CD8-positive, alpha-beta T cell (primary cell): ENCODE measurements at regions of chr2 and their contacts with region 1.

Region 1: GRCh38 chr2:219308142-219309093 is 783 bp downstream of the PTPRN start:
- DNase-seq: peak; percentile 44 to 76 (median 67)
- ATAC-seq: peak; percentile 80
- H3K4me3 ChIP-seq: no peak overlapping the region
- H3K4me3 Mint-ChIP-seq: no peak overlapping the region
- H3K27ac ChIP-seq: no peak overlapping the region
- H3K27ac Mint-ChIP-seq: no peak overlapping the region
- H3K4me1 ChIP-seq: peaks cover 6% of the 10 kb centered on the region
- H3K4me1 Mint-ChIP-seq: peaks cover 2% of the 10 kb centered on the region
- H3K27me3 ChIP-seq: peaks cover 11 to 20% of the 10 kb centered on the region in 2 experiments
- H3K27me3 Mint-ChIP-seq: peaks cover 55% of the 10 kb centered on the region
- CTCF ChIP-seq: no peak

Region 2: DNA sequence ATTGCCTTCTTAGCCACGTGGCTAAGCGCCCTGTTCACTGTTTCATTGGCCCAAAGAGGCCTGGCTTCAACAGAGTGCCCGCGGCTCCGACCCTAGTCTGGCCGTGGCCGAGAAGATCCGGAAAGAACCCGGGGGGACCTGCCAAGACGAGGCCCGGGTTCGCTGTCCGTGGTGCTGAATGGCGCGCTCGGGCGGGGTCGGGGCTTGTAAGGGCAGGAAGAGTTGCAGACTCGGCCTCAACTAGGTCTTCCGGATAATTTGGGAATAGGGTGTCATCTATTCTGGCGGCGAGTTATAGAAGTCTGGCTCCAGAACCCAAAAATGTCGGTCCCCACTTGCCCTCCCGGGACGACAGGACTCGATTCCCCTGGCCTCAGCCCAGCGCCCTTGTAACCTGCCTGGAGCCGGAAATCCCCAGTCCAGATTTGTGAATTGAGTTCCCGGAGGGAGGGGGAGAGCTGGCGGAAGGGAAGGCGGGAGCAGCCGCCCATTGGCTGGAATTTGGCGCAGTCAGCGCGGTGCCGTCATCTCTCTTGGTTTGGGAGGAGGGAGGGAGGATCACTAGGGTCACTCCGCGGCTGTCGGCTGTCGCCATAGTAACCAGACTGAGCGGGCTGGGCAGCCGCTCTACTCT is 345.4 kb before region 1 on chr2:
- CTCF ChIA-PET with region 1: no interaction called
- POLR2A ChIA-PET with region 1: no interaction called
- intact Hi-C with region 1: loop called in 1 of 2 experiments (anchors 5 kb)
- DNase-seq: peak; percentile 31 to 71 (median 64)
- ATAC-seq: peak; percentile 33
- H3K4me3 ChIP-seq: no peak overlapping the region
- H3K4me3 Mint-ChIP-seq: no peak overlapping the region
- H3K27ac ChIP-seq: no peak overlapping the region
- H3K27ac Mint-ChIP-seq: no peak overlapping the region
- H3K4me1 ChIP-seq: peaks cover 9% of the 10 kb centered on the region
- H3K4me1 Mint-ChIP-seq: peaks cover 18% of the 10 kb centered on the region
- H3K27me3 ChIP-seq: peaks cover 35 to 51% of the 10 kb centered on the region in 2 experiments
- H3K27me3 Mint-ChIP-seq: peaks cover 63% of the 10 kb centered on the region
- CTCF ChIP-seq: no peak

Region 3: GRCh38 chr2:219041252-219041651 is 267.2 kb before region 1 on chr2 and contains the start of gene CFAP65:
- CTCF ChIA-PET with region 1: no interaction called
- POLR2A ChIA-PET with region 1: no interaction called
- intact Hi-C with region 1: loop called in 1 of 2 experiments (anchors 5 kb)
- DNase-seq: peak in 1 of 9 experiments; percentile 48
- ATAC-seq: peak; percentile 63
- H3K4me3 ChIP-seq: no peak within 1 kb of the TSS
- H3K4me3 Mint-ChIP-seq: peak within 1 kb of the TSS; percentile 72
- H3K27ac ChIP-seq: no peak within 1 kb of the TSS
- H3K27ac Mint-ChIP-seq: no peak within 1 kb of the TSS
- H3K4me1 ChIP-seq: peaks cover 3% of the 10 kb centered on the region
- H3K4me1 Mint-ChIP-seq: peaks cover 8% of the 10 kb centered on the region
- H3K27me3 ChIP-seq: peaks cover 7 to 27% of the 10 kb centered on the region in 2 experiments
- H3K27me3 Mint-ChIP-seq: peaks cover 65% of the 10 kb centered on the region
- CTCF ChIP-seq: no peak
- total RNA-seq, gene CFAP65: not detected

Region 4: GRCh38 chr2:219269362-219270054 is 38.9 kb before region 1 on chr2:
- CTCF ChIA-PET with region 1: no interaction called
- POLR2A ChIA-PET with region 1: no interaction called
- intact Hi-C with region 1: loop called in 1 of 2 experiments (anchors 5 kb)
- DNase-seq: no peak
- ATAC-seq: no peak
- H3K4me3 ChIP-seq: no peak overlapping the region
- H3K4me3 Mint-ChIP-seq: no peak overlapping the region
- H3K27ac ChIP-seq: no peak overlapping the region
- H3K27ac Mint-ChIP-seq: no peak overlapping the region
- H3K4me1 ChIP-seq: no peaks in the 10 kb centered on the region
- H3K4me1 Mint-ChIP-seq: no peaks in the 10 kb centered on the region
- H3K27me3 ChIP-seq: no peaks in the 10 kb centered on the region
- H3K27me3 Mint-ChIP-seq: no peaks in the 10 kb centered on the region
- CTCF ChIP-seq: no peak

Region 5: GRCh38 chr2:219331560-219332213 is 23.3 kb after region 1 on chr2:
- CTCF ChIA-PET with region 1: no interaction called
- POLR2A ChIA-PET with region 1: no interaction called
- intact Hi-C with region 1: loop called in 1 of 2 experiments (anchors 1 kb)
- DNase-seq: peak in 4 of 9 experiments; percentile 12 to 34 (median 28)
- ATAC-seq: no peak
- H3K4me3 ChIP-seq: no peak overlapping the region
- H3K4me3 Mint-ChIP-seq: no peak overlapping the region
- H3K27ac ChIP-seq: no peak overlapping the region
- H3K27ac Mint-ChIP-seq: no peak overlapping the region
- H3K4me1 ChIP-seq: no peaks in the 10 kb centered on the region
- H3K4me1 Mint-ChIP-seq: no peaks in the 10 kb centered on the region
- H3K27me3 ChIP-seq: peaks cover 18 to 20% of the 10 kb centered on the region in 2 experiments
- H3K27me3 Mint-ChIP-seq: peaks cover 62% of the 10 kb centered on the region
- CTCF ChIP-seq: no peak